Activated CD4-positive, alpha-beta T cell treated with anti-CD3 and anti-CD28 coated beads, Interleukin-2, amount 10 ng/mL, durations not matched to agents 24 days and 14 days (primary cell): ENCODE measurements at regions of chr12 and their contacts with region 1.

Region 1: GRCh38 chr12:53459097-53459496 is 7.2 kb downstream of the PCBP2 start:
- DNase-seq: no peak
- H3K4me3 Mint-ChIP-seq: no peak overlapping the region
- H3K27ac Mint-ChIP-seq: no peak overlapping the region
- H3K4me1 Mint-ChIP-seq: peaks cover 39% of the 10 kb centered on the region
- H3K27me3 Mint-ChIP-seq: no peaks in the 10 kb centered on the region

Region 2: GRCh38 chr12:53299454-53300180 is 159.5 kb before region 1 on chr12 and contains the start of gene MYG1:
- intact Hi-C with region 1: no loop called
- DNase-seq: peak; percentile 96
- H3K4me3 Mint-ChIP-seq: peak within 1 kb of the TSS; percentile 94
- H3K27ac Mint-ChIP-seq: peak within 1 kb of the TSS; percentile 91
- H3K4me1 Mint-ChIP-seq: peaks cover 53% of the 10 kb centered on the region
- H3K27me3 Mint-ChIP-seq: no peaks in the 10 kb centered on the region
- total RNA-seq, gene MYG1: 104 and 108 TPM in 2 replicates

Region 3: GRCh38 chr12:53402871-53403270 is 56.2 kb before region 1 on chr12:
- intact Hi-C with region 1: no loop called
- DNase-seq: no peak
- H3K4me3 Mint-ChIP-seq: no peak overlapping the region
- H3K27ac Mint-ChIP-seq: no peak overlapping the region
- H3K4me1 Mint-ChIP-seq: peaks cover 4% of the 10 kb centered on the region
- H3K27me3 Mint-ChIP-seq: no peaks in the 10 kb centered on the region

Region 4: GRCh38 chr12:53472056-53472582 is 13.0 kb after region 1 on chr12:
- intact Hi-C with region 1: loop called (anchors 2 kb)
- DNase-seq: no peak
- H3K4me3 Mint-ChIP-seq: no peak overlapping the region
- H3K27ac Mint-ChIP-seq: no peak overlapping the region
- H3K4me1 Mint-ChIP-seq: peaks cover 35% of the 10 kb centered on the region
- H3K27me3 Mint-ChIP-seq: no peaks in the 10 kb centered on the region